ENCODE measurements at regions of chr7 and their contacts with region 1.

Region 1: GRCh38 chr7:22675917-22676343 is 51.1 kb upstream of the IL6 start:
- DNase-seq: no peak
- ATAC-seq: peak; percentile 50
- H3K4me3 Mint-ChIP-seq: peak overlapping the region; percentile 68
- H3K27ac Mint-ChIP-seq: peak overlapping the region; percentile 81
- H3K4me1 Mint-ChIP-seq: peaks cover 81% of the 10 kb centered on the region
- H3K27me3 Mint-ChIP-seq: no peaks in the 10 kb centered on the region

Region 2: DNA sequence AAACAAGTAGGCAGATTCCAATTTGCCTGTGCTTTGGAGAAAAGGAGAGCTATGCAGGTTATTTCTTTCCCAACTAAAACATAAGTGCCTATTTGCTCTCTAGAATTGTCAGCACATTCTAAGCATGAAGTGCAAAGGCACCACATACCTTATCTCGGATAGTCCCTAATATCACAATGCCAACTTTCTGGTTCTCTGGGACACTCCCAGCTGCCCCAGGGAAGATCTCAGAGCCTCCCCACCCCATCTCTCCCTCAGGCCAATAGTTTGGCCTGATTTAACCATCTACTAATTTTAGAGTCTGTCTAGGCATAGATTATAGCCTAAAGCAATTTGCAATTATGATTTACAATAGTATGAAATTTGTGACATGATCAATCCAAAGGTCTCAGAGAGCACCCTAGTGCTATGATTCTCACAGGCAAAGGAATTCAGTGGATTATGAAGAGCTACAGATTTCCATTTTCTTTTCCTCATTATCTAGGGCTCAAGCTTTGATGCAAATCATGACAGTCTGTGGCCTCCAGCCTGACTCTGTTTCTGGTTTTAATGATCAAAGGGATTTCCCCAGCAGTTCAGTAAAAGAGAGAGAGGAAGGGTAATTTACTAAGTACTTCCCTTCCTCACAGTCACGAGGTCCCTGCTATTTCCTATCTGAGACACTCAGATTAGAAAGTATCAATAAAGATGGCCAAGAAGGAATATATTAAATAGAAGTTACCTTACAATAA is 22.1 kb after region 1 on chr7:
- POLR2A ChIA-PET with region 1: interaction called, 39 read pairs
- DNase-seq: no peak
- ATAC-seq: peak; percentile 77
- H3K4me3 Mint-ChIP-seq: peak overlapping the region; percentile 38
- H3K27ac Mint-ChIP-seq: peak overlapping the region; percentile 69
- H3K4me1 Mint-ChIP-seq: peaks cover 74% of the 10 kb centered on the region
- H3K27me3 Mint-ChIP-seq: peaks cover under 1% of the 10 kb centered on the region

Region 3: DNA sequence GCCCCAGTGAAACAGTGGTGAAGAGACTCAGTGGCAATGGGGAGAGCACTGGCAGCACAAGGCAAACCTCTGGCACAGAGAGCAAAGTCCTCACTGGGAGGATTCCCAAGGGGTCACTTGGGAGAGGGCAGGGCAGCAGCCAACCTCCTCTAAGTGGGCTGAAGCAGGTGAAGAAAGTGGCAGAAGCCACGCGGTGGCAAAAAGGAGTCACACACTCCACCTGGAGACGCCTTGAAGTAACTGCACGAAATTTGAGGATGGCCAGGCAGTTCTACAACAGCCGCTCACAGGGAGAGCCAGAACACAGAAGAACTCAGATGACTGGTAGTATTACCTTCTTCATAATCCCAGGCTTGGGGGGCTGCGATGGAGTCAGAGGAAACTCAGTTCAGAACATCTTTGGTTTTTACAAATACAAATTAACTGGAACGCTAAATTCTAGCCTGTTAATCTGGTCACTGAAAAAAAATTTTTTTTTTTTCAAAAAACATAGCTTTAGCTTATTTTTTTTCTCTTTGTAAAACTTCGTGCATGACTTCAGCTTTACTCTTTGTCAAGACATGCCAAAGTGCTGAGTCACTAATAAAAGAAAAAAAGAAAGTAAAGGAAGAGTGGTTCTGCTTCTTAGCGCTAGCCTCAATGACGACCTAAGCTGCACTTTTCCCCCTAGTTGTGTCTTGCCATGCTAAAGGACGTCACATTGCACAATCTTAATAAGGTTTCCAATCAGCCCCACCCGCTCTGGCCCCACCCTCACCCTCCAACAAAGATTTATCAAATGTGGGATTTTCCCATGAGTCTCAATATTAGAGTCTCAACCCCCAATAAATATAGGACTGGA is 50.6 kb after region 1 on chr7:
- POLR2A ChIA-PET with region 1: interaction called, 10 read pairs
- DNase-seq: peak; percentile 66
- ATAC-seq: peak; percentile 90
- H3K4me3 Mint-ChIP-seq: peak overlapping the region; percentile 75
- H3K27ac Mint-ChIP-seq: peak overlapping the region; percentile 83
- H3K4me1 Mint-ChIP-seq: peaks cover 50% of the 10 kb centered on the region
- H3K27me3 Mint-ChIP-seq: peaks cover 9% of the 10 kb centered on the region

Region 4: GRCh38 chr7:22765609-22766008 is 89.7 kb after region 1 on chr7:
- POLR2A ChIA-PET with region 1: no interaction called
- DNase-seq: no peak
- ATAC-seq: no peak
- H3K4me3 Mint-ChIP-seq: no peak overlapping the region
- H3K27ac Mint-ChIP-seq: no peak overlapping the region
- H3K4me1 Mint-ChIP-seq: no peaks in the 10 kb centered on the region
- H3K27me3 Mint-ChIP-seq: peaks cover 64% of the 10 kb centered on the region

Region 5: DNA sequence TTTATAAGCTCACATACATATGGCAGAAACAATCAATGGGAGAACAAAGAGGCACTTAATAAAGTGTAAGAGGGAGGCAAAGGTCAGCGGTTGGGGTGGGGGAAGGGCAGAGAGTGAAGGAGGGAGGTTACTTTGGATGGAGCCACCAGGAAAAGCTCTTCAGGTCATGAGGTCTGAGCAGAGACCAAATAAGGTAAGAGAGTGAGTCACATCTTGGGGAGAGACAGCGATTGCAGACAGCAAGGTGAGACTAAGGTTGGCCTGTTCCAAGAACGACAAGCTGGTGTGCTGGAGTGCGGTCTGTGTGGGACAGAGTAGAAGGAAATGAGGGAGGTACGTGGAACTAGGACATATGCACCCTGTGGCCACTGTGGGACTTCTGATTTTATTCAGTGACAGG is 221.0 kb after region 1 on chr7:
- POLR2A ChIA-PET with region 1: no interaction called
- DNase-seq: no peak
- ATAC-seq: peak; percentile 52
- H3K4me3 Mint-ChIP-seq: no peak overlapping the region
- H3K27ac Mint-ChIP-seq: no peak overlapping the region
- H3K4me1 Mint-ChIP-seq: peaks cover 10% of the 10 kb centered on the region
- H3K27me3 Mint-ChIP-seq: peaks cover 6% of the 10 kb centered on the region

Measured in activated naive CD8-positive, alpha-beta T cell treated with anti-CD3 and anti-CD28 coated beads, Interleukin-2, amount 10 ng/mL, durations not matched to agents 7 days and 5 days (primary cell).